ENCODE measurements at regions of chr5 and their contacts with region 1.

Region 1: DNA sequence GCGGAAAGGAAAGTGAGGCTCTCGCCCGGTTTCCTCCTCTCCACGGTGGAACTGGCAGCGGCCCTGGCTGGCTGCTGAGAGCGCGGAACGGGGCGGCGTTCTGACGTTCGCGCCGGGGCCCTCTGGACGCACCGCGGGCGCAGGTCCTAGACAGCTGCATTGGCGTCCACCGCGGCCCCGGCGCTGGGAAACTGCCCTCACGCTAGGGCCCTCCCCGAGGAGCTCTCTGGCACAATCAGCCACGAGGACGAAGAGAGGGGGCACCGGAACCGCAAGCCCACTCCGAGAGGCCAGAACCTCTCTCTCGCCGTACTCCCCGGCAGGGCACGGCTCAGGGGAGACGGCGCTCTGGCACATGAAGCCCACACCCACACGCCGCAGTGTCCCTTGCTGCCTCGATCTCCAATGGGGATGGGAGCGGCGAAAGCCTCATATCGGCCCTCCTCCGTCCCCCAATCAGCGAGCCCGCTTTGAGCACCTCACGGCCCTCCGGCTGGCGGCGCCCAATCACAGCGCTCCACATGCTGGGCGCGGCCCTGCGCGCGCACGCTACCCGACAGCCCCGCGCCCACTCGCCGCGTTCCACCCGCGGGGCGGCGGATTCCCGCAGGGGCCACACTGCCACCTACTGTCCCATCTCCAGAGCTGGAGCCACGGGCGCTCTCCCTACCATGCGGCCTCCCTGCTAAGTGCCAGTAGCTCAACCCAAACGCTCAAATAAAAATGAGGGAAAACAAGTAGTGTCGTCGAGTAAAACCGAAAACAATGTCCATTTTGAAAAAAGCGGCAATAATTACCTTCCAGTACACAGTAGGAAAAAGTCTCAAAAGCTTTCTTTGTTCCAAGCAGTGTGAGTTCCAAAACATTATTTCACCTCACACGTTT is 11.8 kb downstream of the MRPS27 start:
- DNase-seq: peak; percentile 98 to 99
- H3K4me3 ChIP-seq: peak overlapping the region; percentile 58 to 63 (median 60)
- H3K27ac ChIP-seq: peak overlapping the region; percentile 92 to 97 (median 95)
- H3K4me1 ChIP-seq: peaks cover 7 to 38% (median 19%) of the 10 kb centered on the region in 4 donors
- H3K27me3 ChIP-seq: no peaks in the 10 kb centered on the region
- CTCF ChIP-seq: peak in 5 of 7 experiments; percentile 75 to 88 (median 84)
- EP300 ChIP-seq: no peak
- POLR2A ChIP-seq: peak in 2 of 4 donors; percentile 78 to 94

Region 2: GRCh38 chr5:72141440-72142355 is 166.5 kb before region 1 on chr5:
- intact Hi-C with region 1: loop called (anchors 10 kb)
- DNase-seq: peak in 1 of 2 donors; percentile 77
- H3K4me3 ChIP-seq: no peak overlapping the region
- H3K27ac ChIP-seq: peak overlapping the region in 4 of 5 donors; percentile 64 to 83 (median 74)
- H3K4me1 ChIP-seq: peaks cover 0 to 74% (median 26%) of the 10 kb centered on the region in 4 donors
- H3K27me3 ChIP-seq: no peaks in the 10 kb centered on the region
- CTCF ChIP-seq: no peak
- EP300 ChIP-seq: no peak
- POLR2A ChIP-seq: no peak

Measured in stomach (tissue), 19 donors.